ENCODE measurements at regions of chr19 and their contacts with region 1.

Region 1: GRCh38 chr19:34336781-34337271 is 28.2 kb upstream of the GPI start:
- DNase-seq: peak; percentile 16
- H3K4me3 ChIP-seq: no peak overlapping the region
- H3K27ac ChIP-seq: no peak overlapping the region
- H3K4me1 ChIP-seq: no peaks in the 10 kb centered on the region
- H3K27me3 ChIP-seq: no peaks in the 10 kb centered on the region
- CTCF ChIP-seq: peak; percentile 58 to 67

Region 2: DNA sequence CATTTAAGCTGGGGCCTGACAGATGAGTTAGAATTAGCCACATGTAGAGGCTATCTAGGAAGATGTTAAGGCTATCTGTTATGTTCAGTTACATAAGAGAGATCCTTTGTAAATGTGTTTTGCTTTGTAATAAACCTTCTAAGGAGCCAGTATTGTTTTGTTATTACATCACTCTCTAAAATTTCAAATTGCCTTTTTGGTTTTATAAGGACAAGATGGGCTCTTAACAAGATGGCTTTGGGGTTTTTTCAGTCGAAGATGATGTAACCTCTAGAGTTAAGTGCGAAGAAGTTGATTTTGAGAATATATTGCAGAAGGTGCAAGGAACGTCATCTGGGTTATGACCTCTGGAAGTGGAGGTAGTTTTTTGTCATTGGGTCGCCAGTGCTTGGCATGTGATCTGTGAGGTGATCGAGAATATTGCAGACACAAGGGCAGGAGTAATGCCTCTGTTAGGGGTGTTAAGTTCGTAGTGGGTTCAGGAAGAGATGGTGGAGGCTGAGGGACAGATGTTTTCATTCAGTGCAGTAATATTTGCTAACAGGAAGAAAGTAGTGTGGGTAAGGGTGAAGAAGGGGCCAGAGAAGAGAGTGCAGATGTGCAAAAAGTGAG is 151.8 kb before region 1 on chr19:
- CTCF ChIA-PET with region 1: no interaction called
- dilution Hi-C with region 1: no loop called
- in situ Hi-C with region 1: no loop called
- intact Hi-C with region 1: no loop called
- DNase-seq: no peak
- H3K4me3 ChIP-seq: no peak overlapping the region
- H3K27ac ChIP-seq: no peak overlapping the region
- H3K4me1 ChIP-seq: no peaks in the 10 kb centered on the region
- H3K27me3 ChIP-seq: no peaks in the 10 kb centered on the region
- CTCF ChIP-seq: no peak

Region 3: GRCh38 chr19:34253699-34254551 is 82.9 kb before region 1 on chr19:
- CTCF ChIA-PET with region 1: no interaction called
- dilution Hi-C with region 1: no loop called
- in situ Hi-C with region 1: no loop called
- intact Hi-C with region 1: loop called (anchors 2 kb)
- DNase-seq: no peak
- H3K4me3 ChIP-seq: peak overlapping the region; percentile 87 to 97 (median 89)
- H3K27ac ChIP-seq: peak overlapping the region; percentile 79
- H3K4me1 ChIP-seq: no peaks in the 10 kb centered on the region
- H3K27me3 ChIP-seq: no peaks in the 10 kb centered on the region
- CTCF ChIP-seq: no peak

Region 4: GRCh38 chr19:34269968-34270621 is 66.7 kb before region 1 on chr19:
- CTCF ChIA-PET with region 1: no interaction called
- dilution Hi-C with region 1: no loop called
- in situ Hi-C with region 1: no loop called
- intact Hi-C with region 1: loop called (anchors 5 kb)
- DNase-seq: peak; percentile 70
- H3K4me3 ChIP-seq: no peak overlapping the region
- H3K27ac ChIP-seq: peak overlapping the region; percentile 8
- H3K4me1 ChIP-seq: peaks cover 31% of the 10 kb centered on the region
- H3K27me3 ChIP-seq: no peaks in the 10 kb centered on the region
- CTCF ChIP-seq: no peak

Region 5: GRCh38 chr19:34707661-34708060 is 370.8 kb after region 1 on chr19:
- CTCF ChIA-PET with region 1: no interaction called
- dilution Hi-C with region 1: no loop called
- in situ Hi-C with region 1: no loop called
- intact Hi-C with region 1: no loop called
- DNase-seq: no peak
- H3K4me3 ChIP-seq: no peak overlapping the region
- H3K27ac ChIP-seq: no peak overlapping the region
- H3K4me1 ChIP-seq: no peaks in the 10 kb centered on the region
- H3K27me3 ChIP-seq: no peaks in the 10 kb centered on the region
- CTCF ChIP-seq: no peak

Measured in mammary epithelial cell (primary cell).